ENCODE measurements at regions of chr15 and their contacts with region 1.

Region 1: DNA sequence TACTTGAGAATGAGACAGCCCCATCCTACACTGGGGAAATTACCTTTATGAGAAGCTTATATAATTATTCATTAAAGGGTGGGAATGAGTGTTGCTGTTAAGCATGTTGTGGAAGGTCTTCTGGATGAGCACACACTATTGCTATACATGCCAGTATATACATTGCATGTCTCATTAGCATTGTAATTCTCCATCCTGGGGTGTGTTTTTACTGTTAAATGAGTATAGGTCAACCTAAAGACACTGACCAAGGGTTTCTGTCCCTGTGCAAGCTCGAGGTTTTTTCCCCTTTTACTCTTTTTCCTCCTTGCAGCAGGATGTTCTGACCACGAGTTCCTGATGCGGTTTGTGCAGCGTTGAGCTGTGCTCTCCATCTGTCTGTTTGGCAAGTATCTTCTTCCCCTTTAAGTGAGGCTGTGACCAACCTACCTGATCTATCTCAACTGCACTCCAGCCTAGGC is 7.2 kb upstream of the IVD start:
- DNase-seq: no peak
- ATAC-seq: peak; percentile 87
- H3K4me3 Mint-ChIP-seq: peak overlapping the region; percentile 78
- H3K27ac Mint-ChIP-seq: peak overlapping the region; percentile 83
- H3K4me1 Mint-ChIP-seq: peaks cover 23% of the 10 kb centered on the region
- H3K27me3 Mint-ChIP-seq: no peaks in the 10 kb centered on the region

Region 2: DNA sequence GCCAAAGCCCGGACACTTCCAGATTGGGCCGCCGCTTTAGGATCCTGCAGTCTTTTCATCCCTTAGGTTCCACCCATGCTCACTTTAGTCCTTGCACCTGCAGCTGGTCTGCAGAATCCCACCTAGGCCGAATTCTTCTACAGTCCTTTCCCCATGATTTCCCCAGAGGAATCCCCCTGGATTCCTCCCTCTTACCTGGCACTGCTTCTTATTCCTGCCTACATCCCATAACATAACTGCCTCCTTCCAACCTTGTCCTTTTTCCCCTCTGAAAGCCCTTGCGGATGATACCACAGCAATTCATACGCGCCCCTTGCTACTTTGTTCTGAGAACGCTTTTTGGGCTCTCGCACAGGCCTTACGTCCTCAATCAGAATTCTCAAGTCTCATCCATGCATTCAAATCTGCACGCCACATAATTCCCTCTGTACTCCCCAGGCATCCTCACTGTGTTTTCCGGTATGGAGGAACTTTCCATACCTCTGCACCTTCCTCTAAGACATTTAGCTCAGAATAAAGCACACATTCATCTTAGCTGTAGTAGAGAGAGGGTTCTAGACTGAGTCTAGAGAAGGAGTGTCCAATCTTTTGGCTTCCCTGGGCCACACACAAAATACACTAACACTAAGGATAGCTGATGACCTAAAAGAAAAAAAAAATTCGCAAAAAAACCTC is 463.9 kb before region 1 on chr15:
- POLR2A ChIA-PET with region 1: interaction called, 10 read pairs
- DNase-seq: peak; percentile 31
- ATAC-seq: no peak
- H3K4me3 Mint-ChIP-seq: peak overlapping the region; percentile 92
- H3K27ac Mint-ChIP-seq: peak overlapping the region; percentile 77
- H3K4me1 Mint-ChIP-seq: peaks cover 28% of the 10 kb centered on the region
- H3K27me3 Mint-ChIP-seq: peaks cover 9% of the 10 kb centered on the region

Region 3: GRCh38 chr15:40382580-40383456 is 15.6 kb before region 1 on chr15 and contains the start of gene KNSTRN:
- POLR2A ChIA-PET with region 1: interaction called, 15 read pairs
- DNase-seq: peak; percentile 86
- ATAC-seq: peak; percentile 97
- H3K4me3 Mint-ChIP-seq: peak within 1 kb of the TSS; percentile 99
- H3K27ac Mint-ChIP-seq: peak within 1 kb of the TSS; percentile 93
- H3K4me1 Mint-ChIP-seq: peaks cover 23% of the 10 kb centered on the region
- H3K27me3 Mint-ChIP-seq: peaks cover 8% of the 10 kb centered on the region
- total RNA-seq, gene KNSTRN: 47.0 to 49.5 TPM

Measured in activated naive CD8-positive, alpha-beta T cell treated with anti-CD3 and anti-CD28 coated beads, Interleukin-2, amount 10 ng/mL, durations not matched to agents 7 days and 5 days (primary cell).